ENCODE measurements at regions of chr3 and their contacts with region 1.

Region 1: DNA sequence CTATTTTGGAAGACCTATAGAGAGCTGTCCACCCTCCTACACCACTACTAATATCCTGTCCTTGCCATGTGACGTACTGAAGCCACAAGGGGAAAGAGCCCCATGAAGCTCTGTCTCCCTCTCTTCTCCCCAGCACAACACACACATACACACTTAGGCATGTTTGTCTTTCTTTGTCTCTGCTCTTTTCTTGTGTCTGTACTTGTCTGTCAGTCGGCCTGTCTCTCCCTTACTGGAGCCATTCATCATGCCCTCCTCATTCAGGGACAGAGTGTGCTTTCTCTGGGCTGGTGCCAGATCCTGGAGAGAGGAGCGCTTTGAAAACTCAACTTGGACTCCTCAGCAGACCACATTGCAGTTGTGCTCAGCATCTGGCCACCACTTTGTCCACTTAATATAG is 47.6 kb downstream of the PSMD6 start:
- DNase-seq: no peak
- ATAC-seq: no peak
- H3K4me3 ChIP-seq: no peak overlapping the region
- H3K27ac ChIP-seq: 0 out of 2 replicates have a peak overlapping the region, but pooled peaks have one; percentile 5
- H3K4me1 ChIP-seq: peaks cover 22% of the 10 kb centered on the region
- H3K27me3 ChIP-seq: no peaks in the 10 kb centered on the region
- CTCF ChIP-seq: no peak
- POLR2A ChIP-seq: no peak
- RAD21 ChIP-seq: no peak

Region 2: GRCh38 chr3:63791974-63792545 is 183.7 kb before region 1 on chr3:
- CTCF ChIA-PET with region 1: no interaction called
- POLR2A ChIA-PET with region 1: no interaction called
- dilution Hi-C with region 1: no loop called
- in situ Hi-C with region 1: no loop called
- intact Hi-C with region 1: no loop called
- DNase-seq: peak; percentile 53
- ATAC-seq: peak; percentile 59
- H3K4me3 ChIP-seq: no peak overlapping the region
- H3K27ac ChIP-seq: no peak overlapping the region
- H3K4me1 ChIP-seq: no peaks in the 10 kb centered on the region
- H3K27me3 ChIP-seq: peaks cover 3% of the 10 kb centered on the region
- CTCF ChIP-seq: peak; percentile 59
- POLR2A ChIP-seq: no peak
- RAD21 ChIP-seq: peak; percentile 61

Region 3: GRCh38 chr3:63863148-63864007 is 112.3 kb before region 1 on chr3 and contains the starts of genes ATXN7 and THOC7:
- CTCF ChIA-PET with region 1: no interaction called
- POLR2A ChIA-PET with region 1: no interaction called
- dilution Hi-C with region 1: no loop called
- in situ Hi-C with region 1: no loop called
- intact Hi-C with region 1: loop called (anchors 5 kb)
- DNase-seq: peak; percentile 38
- ATAC-seq: peak; percentile 84
- H3K4me3 ChIP-seq: peak within 1 kb of the TSS; percentile 94
- H3K27ac ChIP-seq: peak within 1 kb of the TSS; percentile 90
- H3K4me1 ChIP-seq: peaks cover 3% of the 10 kb centered on the region; the same call in 1 of the 2 replicates
- H3K27me3 ChIP-seq: no peaks in the 10 kb centered on the region
- CTCF ChIP-seq: no peak
- POLR2A ChIP-seq: no peak
- RAD21 ChIP-seq: no peak
- total RNA-seq, gene ATXN7: 11.9 and 13.6 TPM in 2 replicates
- total RNA-seq, gene THOC7: 25.8 and 51.7 TPM in 2 replicates

Region 4: DNA sequence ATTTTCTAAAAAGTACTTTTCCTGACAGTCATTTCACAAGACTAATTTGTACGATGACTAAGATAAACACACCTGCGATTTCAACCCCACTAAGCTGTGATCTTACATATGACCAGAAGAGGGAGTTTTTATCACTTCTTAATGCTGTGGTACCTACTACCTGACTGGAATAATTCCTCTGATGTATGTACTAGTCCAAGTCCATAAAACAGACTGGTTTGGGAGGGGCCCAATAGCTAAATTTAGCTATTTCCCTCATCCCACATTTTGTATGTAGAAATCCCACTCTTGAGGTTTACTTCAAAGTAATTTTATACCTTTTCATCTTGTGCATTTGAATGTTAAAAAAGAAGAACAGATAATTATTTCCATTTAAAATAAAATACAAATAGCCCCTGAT is 13.8 kb before region 1 on chr3:
- CTCF ChIA-PET with region 1: interaction called, 11 read pairs
- POLR2A ChIA-PET with region 1: no interaction called
- dilution Hi-C with region 1: no loop called
- in situ Hi-C with region 1: no loop called
- intact Hi-C with region 1: no loop called
- DNase-seq: peak; percentile 68
- ATAC-seq: no peak
- H3K4me3 ChIP-seq: no peak overlapping the region
- H3K27ac ChIP-seq: no peak overlapping the region
- H3K4me1 ChIP-seq: peaks cover 5% of the 10 kb centered on the region
- H3K27me3 ChIP-seq: no peaks in the 10 kb centered on the region
- CTCF ChIP-seq: peak; percentile 58
- POLR2A ChIP-seq: no peak
- RAD21 ChIP-seq: peak; percentile 22; the same call in 1 of the 2 replicates

Region 5: DNA sequence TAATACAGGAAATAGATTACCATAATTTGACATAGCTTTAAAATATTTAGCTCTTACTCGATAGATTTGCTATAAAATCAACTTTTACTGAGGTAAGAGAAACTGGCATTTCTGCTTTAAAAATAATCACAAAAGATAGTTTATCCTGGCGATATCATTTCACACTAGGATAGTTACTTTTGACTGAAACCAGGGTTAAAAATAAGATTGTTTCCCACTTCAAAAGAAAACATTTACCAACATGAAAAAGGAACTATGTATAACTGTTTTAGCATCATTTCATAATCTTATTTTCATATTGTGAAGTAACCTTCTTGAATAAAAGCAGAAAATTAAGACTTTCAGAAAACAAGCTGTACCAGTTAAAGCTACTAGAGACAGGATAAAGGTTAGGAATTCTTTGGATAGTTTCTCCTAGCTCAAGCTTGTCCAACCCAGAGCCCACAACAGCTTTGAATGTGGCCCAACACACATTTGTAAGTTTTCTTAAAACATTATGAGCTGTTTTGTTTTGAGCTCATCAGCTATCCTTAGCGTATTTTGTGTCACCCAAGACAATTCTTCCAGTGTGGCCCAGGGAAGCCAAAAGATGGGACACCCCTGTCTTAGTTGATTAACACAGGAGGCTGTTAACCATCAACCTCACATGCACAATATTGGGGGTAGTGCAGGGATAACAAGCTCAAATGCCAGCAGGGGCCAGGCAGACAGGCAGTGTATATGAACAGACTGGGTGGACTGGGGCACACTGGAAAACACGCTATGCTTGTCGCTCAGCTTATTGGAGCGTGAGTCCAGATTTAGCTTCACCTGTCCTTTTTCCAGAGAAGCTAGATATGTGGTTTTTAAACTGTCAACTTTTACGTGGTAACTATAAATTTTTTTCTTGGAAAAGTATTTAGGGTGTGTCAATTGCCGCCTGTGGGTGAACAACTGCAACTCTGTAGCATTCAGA is 32.6 kb after region 1 on chr3:
- CTCF ChIA-PET with region 1: no interaction called
- POLR2A ChIA-PET with region 1: no interaction called
- dilution Hi-C with region 1: no loop called
- in situ Hi-C with region 1: no loop called
- intact Hi-C with region 1: no loop called
- DNase-seq: no peak
- ATAC-seq: peak; percentile 13; the same call in 1 of the 2 replicates
- H3K4me3 ChIP-seq: no peak overlapping the region
- H3K27ac ChIP-seq: no peak overlapping the region
- H3K4me1 ChIP-seq: peaks cover 6% of the 10 kb centered on the region
- H3K27me3 ChIP-seq: no peaks in the 10 kb centered on the region
- CTCF ChIP-seq: no peak
- POLR2A ChIP-seq: no peak
- RAD21 ChIP-seq: no peak